Activated naive CD4-positive, alpha-beta T cell treated with anti-CD3 and anti-CD28 coated beads for 36 hours (primary cell): ENCODE measurements at regions of chr7 and their contacts with region 1.

Region 1: GRCh38 chr7:130277763-130278643 is 11.3 kb downstream of the CPA2 start:
- DNase-seq: no peak
- H3K4me3 Mint-ChIP-seq: no peak overlapping the region
- H3K27ac Mint-ChIP-seq: peak overlapping the region; percentile 85
- H3K4me1 Mint-ChIP-seq: peaks cover 44% of the 10 kb centered on the region
- H3K27me3 Mint-ChIP-seq: no peaks in the 10 kb centered on the region

Region 2: GRCh38 chr7:130205084-130205947 is 72.7 kb before region 1 on chr7 and contains the start of gene TMEM209:
- CTCF ChIA-PET with region 1: no interaction called
- intact Hi-C with region 1: loop called (anchors 1 kb)
- DNase-seq: peak; percentile 97
- H3K4me3 Mint-ChIP-seq: peak within 1 kb of the TSS; percentile 98
- H3K27ac Mint-ChIP-seq: peak within 1 kb of the TSS; percentile 98
- H3K4me1 Mint-ChIP-seq: peaks cover 33% of the 10 kb centered on the region
- H3K27me3 Mint-ChIP-seq: no peaks in the 10 kb centered on the region
- total RNA-seq, gene TMEM209: 36.0 to 37.3 TPM

Region 3: DNA sequence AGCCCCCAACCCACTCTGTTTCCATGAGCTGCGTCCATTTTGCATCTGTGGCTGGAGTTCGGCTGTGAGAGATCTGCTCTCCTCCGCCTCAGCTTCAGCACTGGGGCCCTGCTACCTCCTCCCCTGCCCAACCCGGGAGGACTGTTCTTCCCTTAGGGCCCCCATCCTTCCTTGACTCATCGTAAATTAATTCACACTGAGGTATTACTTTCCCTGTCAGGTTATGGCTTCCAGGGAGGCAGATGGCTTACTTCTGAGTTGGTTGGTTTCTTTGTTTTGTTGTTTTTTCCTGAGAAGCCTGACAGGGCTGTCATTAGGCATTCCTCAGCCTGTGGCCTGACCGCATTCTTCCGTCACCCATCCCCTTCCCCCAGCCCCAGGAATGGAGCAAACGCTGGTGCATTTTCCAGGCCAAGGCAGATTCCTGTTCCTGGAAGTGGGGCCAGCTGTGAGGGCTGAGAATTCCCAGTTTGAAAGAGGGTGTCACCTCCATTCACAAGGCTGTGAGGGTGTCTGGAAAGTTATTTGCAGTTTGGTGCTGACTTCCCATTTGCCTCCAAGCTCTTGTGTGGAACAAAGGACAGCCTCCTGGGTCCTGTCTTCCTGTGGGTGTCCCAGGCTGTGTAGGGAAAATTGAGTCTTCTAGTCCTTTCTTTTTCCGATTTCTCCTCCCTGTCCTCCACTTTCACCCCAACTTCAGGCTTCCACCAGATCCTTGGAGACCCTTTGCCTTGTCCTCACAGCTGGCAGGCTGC is 78.3 kb after region 1 on chr7:
- CTCF ChIA-PET with region 1: no interaction called
- intact Hi-C with region 1: no loop called
- DNase-seq: no peak
- H3K4me3 Mint-ChIP-seq: no peak overlapping the region
- H3K27ac Mint-ChIP-seq: no peak overlapping the region
- H3K4me1 Mint-ChIP-seq: peaks cover 8% of the 10 kb centered on the region
- H3K27me3 Mint-ChIP-seq: no peaks in the 10 kb centered on the region

Region 4: DNA sequence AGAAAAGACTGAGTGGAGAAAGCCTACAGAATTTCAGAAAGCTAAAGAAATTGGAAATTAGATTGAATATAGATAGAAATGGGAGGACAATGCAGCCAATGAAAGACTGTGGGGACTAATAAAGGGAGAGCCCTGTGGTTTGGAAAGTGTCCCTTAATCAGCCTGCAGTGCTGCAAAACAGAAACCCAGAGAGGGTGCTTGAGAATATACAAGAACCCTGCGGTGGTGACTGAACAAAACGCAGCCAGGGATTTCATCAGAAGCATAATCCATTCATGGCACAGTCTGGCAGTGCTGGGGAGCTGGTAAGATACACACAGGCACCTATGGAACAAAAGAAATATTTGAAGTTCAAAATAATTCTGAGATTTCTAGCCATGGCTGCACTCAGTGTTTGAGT is 143.7 kb after region 1 on chr7:
- CTCF ChIA-PET with region 1: interaction called, 6 read pairs
- intact Hi-C with region 1: loop called (anchors 1 kb)
- DNase-seq: peak; percentile 65
- H3K4me3 Mint-ChIP-seq: peak overlapping the region; percentile 23
- H3K27ac Mint-ChIP-seq: peak overlapping the region; percentile 78
- H3K4me1 Mint-ChIP-seq: peaks cover 74% of the 10 kb centered on the region
- H3K27me3 Mint-ChIP-seq: no peaks in the 10 kb centered on the region

Region 5: GRCh38 chr7:130446259-130446658 is 168.3 kb after region 1 on chr7:
- CTCF ChIA-PET with region 1: no interaction called
- intact Hi-C with region 1: loop called (anchors 1 kb)
- DNase-seq: peak; percentile 20
- H3K4me3 Mint-ChIP-seq: no peak overlapping the region
- H3K27ac Mint-ChIP-seq: peak overlapping the region; percentile 10
- H3K4me1 Mint-ChIP-seq: peaks cover 29% of the 10 kb centered on the region
- H3K27me3 Mint-ChIP-seq: no peaks in the 10 kb centered on the region

Region 6: DNA sequence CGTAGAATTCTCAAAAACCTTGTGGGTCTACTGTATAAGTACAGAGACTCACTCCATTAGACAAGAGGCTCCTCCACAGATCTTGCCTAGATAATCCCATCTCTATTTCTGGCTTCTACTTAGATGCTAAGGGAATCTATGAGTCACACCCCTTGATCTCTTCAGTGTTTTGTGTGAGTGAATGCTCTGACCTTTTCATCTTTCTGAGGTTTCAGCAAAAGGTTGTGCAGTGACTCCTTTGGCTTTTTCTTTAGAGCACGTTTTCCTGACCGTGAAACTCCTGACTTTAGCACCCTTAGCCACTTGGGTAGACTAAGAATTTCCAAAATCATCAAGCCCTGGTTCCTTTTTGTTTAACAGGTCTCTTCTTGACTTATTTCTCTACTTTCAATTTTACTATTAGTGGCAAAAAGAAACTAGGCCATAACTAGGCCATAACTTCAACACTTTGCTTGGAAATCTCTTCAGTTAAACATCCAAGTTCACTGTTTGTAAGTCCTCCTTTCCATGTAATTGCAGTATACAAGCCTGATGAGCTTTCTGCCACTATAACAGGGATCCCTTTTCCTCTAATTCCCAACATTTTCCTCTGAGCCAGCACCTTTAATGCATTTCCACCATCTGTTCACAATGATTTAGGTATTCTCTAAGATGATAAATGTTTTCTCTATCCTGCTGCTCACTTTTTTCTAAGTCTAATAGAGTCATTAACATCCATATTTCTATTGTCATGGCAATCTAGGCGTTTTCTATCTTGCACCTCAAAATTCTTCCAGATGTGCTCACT is 371.2 kb after region 1 on chr7:
- CTCF ChIA-PET with region 1: no interaction called
- intact Hi-C with region 1: loop called (anchors 2 kb)
- DNase-seq: peak; percentile 53
- H3K4me3 Mint-ChIP-seq: no peak overlapping the region
- H3K27ac Mint-ChIP-seq: peak overlapping the region; percentile 79
- H3K4me1 Mint-ChIP-seq: peaks cover 29% of the 10 kb centered on the region
- H3K27me3 Mint-ChIP-seq: no peaks in the 10 kb centered on the region